Gastrocnemius medialis (tissue), 4 donors: ENCODE measurements at regions of chr12 and their contacts with region 1.

Region 1: DNA sequence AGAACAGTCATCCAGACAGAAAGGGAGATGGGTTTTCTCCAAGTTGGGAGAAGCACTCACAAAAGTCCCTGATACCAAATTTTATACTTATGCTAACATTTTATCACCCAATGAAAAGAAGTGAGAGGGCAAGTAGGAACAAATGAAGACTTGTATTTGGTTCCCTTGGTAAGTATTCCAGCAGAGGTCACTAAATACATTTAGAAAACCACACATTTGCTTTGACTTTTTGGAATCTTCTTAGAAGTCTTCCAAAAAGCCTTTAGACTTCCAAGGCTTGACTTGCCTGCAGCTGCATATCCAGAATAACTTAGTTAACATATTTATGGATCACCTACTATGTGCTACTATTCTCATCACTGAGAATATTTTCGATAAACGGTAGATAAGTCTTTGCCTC is 3.1 kb upstream of the GYS2 start:
- DNase-seq: no peak
- ATAC-seq: no peak
- H3K4me3 ChIP-seq: no peak overlapping the region
- H3K27ac ChIP-seq: no peak overlapping the region
- H3K4me1 ChIP-seq: no peaks in the 10 kb centered on the region
- H3K27me3 ChIP-seq: no peaks in the 10 kb centered on the region
- CTCF ChIP-seq: peak in 1 of 5 experiments; percentile 18
- POLR2A ChIP-seq: no peak

Region 2: GRCh38 chr12:21677622-21678277 is 70.0 kb after region 1 on chr12:
- in situ Hi-C with region 1: loop called in 2 of 4 experiments (anchors 5 to 10 kb)
- intact Hi-C with region 1: loop called (anchors 1 kb)
- DNase-seq: no peak
- ATAC-seq: no peak
- H3K4me3 ChIP-seq: no peak overlapping the region
- H3K27ac ChIP-seq: no peak overlapping the region
- H3K4me1 ChIP-seq: no peaks in the 10 kb centered on the region
- H3K27me3 ChIP-seq: no peaks in the 10 kb centered on the region
- CTCF ChIP-seq: no peak
- POLR2A ChIP-seq: no peak

Region 3: GRCh38 chr12:21683115-21683514 is 75.4 kb after region 1 on chr12:
- in situ Hi-C with region 1: loop called in 2 of 4 experiments (anchors 5 to 10 kb)
- intact Hi-C with region 1: loop called (anchors 1 kb)
- DNase-seq: no peak
- ATAC-seq: no peak
- H3K4me3 ChIP-seq: no peak overlapping the region
- H3K27ac ChIP-seq: no peak overlapping the region
- H3K4me1 ChIP-seq: peaks cover 0 to 7% of the 10 kb centered on the region in 2 donors
- H3K27me3 ChIP-seq: no peaks in the 10 kb centered on the region
- CTCF ChIP-seq: no peak
- POLR2A ChIP-seq: no peak

Region 4: DNA sequence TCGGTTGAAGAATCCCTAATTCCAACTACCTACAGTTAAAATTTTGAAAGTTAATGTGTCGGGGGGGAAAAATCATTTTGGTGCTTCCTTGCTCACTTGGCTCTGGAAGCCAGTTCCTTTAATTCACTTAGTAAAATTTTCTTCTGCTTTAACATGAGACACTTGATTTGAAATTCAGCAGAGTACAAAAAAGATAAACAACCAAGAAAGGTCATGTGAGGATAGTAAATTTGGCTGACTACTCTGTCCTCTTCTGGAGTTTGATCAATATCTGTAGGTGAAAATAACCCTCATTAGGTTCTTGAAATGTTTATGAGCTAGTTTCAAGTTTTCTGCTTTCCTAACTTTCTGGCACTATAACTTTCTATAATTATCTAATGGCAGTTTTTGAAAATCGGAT is 123.4 kb after region 1 on chr12:
- in situ Hi-C with region 1: no loop called
- intact Hi-C with region 1: no loop called
- DNase-seq: no peak
- ATAC-seq: no peak
- H3K4me3 ChIP-seq: no peak overlapping the region
- H3K27ac ChIP-seq: no peak overlapping the region
- H3K4me1 ChIP-seq: no peaks in the 10 kb centered on the region
- H3K27me3 ChIP-seq: no peaks in the 10 kb centered on the region
- CTCF ChIP-seq: no peak
- POLR2A ChIP-seq: no peak

Region 5: GRCh38 chr12:22255097-22255496 is 647.4 kb after region 1 on chr12:
- in situ Hi-C with region 1: no loop called
- intact Hi-C with region 1: no loop called
- DNase-seq: no peak
- ATAC-seq: no peak
- H3K4me3 ChIP-seq: no peak overlapping the region
- H3K27ac ChIP-seq: no peak overlapping the region
- H3K4me1 ChIP-seq: no peaks in the 10 kb centered on the region
- H3K27me3 ChIP-seq: no peaks in the 10 kb centered on the region
- CTCF ChIP-seq: no peak
- POLR2A ChIP-seq: no peak